Sciatic nerve (tissue), 2 donors: ENCODE measurements at regions of chr7 and their contacts with region 1.

Region 1: GRCh38 chr7:18762189-18762588 is 266.6 kb downstream of the HDAC9 start:
- DNase-seq: no peak
- ATAC-seq: peak; percentile 49

Region 2: DNA sequence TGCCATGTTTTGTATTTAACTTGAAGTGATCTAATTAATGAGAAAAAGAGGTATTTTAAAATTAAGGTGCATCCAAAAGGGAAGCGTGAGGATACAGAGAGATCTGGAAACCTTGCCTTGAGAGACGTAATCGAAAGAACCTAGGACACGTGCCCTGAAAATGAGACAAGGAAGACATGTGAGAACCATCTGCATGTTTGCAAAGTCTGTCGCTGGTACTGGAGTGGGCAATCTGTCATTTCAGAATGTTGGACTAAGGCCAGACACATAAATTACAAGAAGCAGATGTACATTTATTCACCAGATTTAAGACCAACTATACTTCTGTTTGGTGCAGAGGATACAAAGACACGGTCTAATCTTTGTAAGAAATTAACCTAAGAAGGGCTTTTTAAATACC is 1966.6 kb before region 1 on chr7:
- intact Hi-C with region 1: loop called (anchors 5 kb)
- DNase-seq: no peak
- ATAC-seq: no peak

Region 3: GRCh38 chr7:18276383-18276782 is 485.8 kb before region 1 on chr7:
- intact Hi-C with region 1: no loop called
- DNase-seq: no peak
- ATAC-seq: no peak

Region 4: DNA sequence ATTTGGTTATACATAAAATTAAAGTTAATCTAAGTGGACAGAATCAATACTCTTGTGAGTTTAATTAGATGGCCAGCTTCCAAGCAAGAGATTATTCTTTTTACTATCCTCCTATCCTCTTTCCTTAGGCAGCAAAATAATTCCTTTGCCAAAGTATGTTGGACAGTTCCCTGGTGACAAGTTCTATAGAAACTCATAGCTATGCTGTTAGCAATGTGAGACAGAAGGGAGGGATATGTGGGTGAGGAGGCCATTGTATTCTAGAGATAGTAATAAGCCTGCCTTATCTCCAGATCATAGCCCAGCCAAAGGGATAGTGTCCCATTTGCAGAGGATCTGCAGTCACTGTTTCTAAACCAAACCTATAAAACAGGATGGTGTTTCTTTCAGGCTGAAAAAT is 448.2 kb before region 1 on chr7:
- intact Hi-C with region 1: no loop called
- DNase-seq: no peak
- ATAC-seq: no peak

Region 5: GRCh38 chr7:18590744-18591340 is 171.3 kb before region 1 on chr7:
- intact Hi-C with region 1: no loop called
- DNase-seq: no peak
- ATAC-seq: peak; percentile 56

Region 6: DNA sequence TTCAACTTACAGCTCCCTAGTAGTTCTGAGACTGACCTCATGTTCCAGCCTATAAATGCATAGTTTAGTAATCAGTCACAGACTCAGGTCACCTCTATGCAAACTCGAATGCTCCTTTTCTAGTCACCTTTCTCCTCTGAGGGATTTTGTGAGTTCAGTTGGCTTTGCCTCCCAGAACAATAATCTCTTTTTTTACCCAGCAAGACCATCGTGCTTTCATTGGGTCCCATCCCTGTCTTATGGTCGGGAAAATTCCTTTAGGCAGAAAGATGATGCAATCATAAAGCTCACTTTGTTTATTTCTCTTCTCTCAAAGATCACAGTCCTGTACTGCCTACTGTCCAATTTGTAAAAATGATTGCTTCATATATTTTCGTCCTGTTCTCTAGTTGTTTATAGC is 316.9 kb after region 1 on chr7:
- intact Hi-C with region 1: no loop called
- DNase-seq: no peak
- ATAC-seq: no peak